ENCODE measurements at regions of chr3 and their contacts with region 1.

Region 1: GRCh38 chr3:112676659-112677234 is 35.8 kb upstream of the CCDC80 start:
- DNase-seq: peak; percentile 87
- H3K4me3 Mint-ChIP-seq: peak overlapping the region; percentile 66
- H3K27ac Mint-ChIP-seq: peak overlapping the region; percentile 82
- H3K4me1 Mint-ChIP-seq: peaks cover 66% of the 10 kb centered on the region
- H3K27me3 Mint-ChIP-seq: peaks cover 9% of the 10 kb centered on the region

Region 2: GRCh38 chr3:110814170-110815007 is 1862.4 kb before region 1 on chr3:
- intact Hi-C with region 1: loop called (anchors 10 kb)
- DNase-seq: peak; percentile 35
- H3K4me3 Mint-ChIP-seq: peak overlapping the region; percentile 43
- H3K27ac Mint-ChIP-seq: peak overlapping the region; percentile 91
- H3K4me1 Mint-ChIP-seq: peaks cover 29% of the 10 kb centered on the region
- H3K27me3 Mint-ChIP-seq: peaks cover 26% of the 10 kb centered on the region

Region 3: DNA sequence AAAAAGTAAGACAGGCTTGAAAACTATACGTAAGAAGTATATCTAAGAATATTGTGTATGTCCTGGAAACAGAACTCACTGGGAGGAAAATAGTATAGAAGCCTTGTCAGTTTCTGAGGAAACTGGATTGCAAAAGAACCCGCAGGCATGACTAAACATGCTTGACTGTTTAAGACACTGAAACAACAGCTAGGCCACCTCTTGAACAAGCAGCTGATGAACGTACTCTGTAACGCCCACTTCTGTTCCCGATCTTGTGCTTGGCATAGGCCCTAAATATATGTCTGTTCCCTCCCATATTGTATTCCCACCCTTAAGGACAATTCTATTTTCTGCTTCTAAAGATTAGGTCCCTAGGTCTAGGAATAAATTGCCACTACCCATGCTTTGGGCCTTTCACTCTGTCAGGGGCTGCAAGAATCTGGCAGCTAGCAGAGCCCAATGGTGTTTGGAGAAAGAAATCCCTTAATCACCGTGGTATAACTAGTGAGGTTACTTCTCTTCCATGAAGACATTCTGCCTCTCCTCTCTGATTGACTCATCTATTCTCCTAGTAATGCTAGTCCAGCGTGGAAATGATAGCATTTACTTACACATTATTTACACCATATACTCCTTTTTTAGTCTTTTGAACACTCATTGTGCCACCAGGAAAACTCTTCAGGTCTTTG is 297.6 kb before region 1 on chr3:
- intact Hi-C with region 1: loop called (anchors 10 kb)
- DNase-seq: no peak
- H3K4me3 Mint-ChIP-seq: no peak overlapping the region
- H3K27ac Mint-ChIP-seq: peak overlapping the region; percentile 83
- H3K4me1 Mint-ChIP-seq: peaks cover 77% of the 10 kb centered on the region
- H3K27me3 Mint-ChIP-seq: no peaks in the 10 kb centered on the region

Region 4: GRCh38 chr3:112473212-112473640 is 203.5 kb before region 1 on chr3:
- intact Hi-C with region 1: no loop called
- DNase-seq: no peak
- H3K4me3 Mint-ChIP-seq: peak overlapping the region; percentile 51
- H3K27ac Mint-ChIP-seq: no peak overlapping the region
- H3K4me1 Mint-ChIP-seq: peaks cover 53% of the 10 kb centered on the region
- H3K27me3 Mint-ChIP-seq: no peaks in the 10 kb centered on the region

Region 5: DNA sequence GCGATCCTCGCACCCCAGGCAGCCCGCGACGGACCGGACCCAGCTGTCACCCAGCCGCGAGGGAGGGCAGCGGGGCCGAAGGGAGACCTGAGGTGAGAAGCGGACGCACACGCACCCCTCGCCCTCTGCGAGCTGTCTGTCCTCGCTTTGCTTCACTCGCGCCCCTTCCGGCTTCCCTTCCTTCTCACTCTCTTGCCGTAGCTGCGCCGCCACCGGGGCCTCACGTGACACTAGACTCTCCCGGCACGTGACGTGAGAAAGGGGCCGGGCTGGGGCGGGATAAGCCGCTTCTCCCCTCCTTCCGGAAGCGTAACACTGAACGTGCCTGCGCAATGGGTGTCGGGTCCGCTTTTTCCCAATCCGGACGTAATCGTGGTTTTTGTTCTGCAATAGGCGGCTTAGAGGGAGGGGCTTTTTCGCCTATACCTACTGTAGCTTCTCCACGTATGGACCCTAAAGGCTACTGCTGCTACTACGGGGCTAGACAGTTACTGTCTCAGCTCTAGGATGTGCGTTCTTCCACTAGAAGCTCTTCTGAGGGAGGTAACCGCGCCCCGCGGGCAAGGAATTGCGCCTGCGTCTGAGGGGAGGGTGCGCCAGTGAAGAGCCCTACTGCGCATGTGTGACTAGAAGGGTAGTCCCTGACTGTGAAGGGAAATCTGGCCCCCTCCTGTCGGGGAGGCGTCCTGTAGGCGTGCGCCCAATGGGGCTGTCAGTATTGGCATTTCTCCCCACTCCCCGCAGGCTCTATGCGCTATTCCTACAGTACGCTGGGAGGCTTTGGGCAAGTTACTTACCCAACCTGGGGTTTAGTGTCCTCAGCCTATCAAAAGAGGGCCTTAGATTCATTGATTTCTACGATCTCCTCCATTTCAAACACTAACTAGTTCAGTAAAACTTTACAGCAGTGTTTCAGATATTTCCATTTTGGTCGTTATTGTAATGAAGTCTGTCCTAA is 114.7 kb before region 1 on chr3 and contains the starts of genes ATG3 and SLC35A5:
- intact Hi-C with region 1: loop called (anchors 2 kb)
- DNase-seq: peak; percentile 98
- H3K4me3 Mint-ChIP-seq: peak within 1 kb of the TSS; percentile 92
- H3K27ac Mint-ChIP-seq: peak within 1 kb of the TSS; percentile 99
- H3K4me1 Mint-ChIP-seq: peaks cover 49% of the 10 kb centered on the region
- H3K27me3 Mint-ChIP-seq: no peaks in the 10 kb centered on the region
- total RNA-seq, gene ATG3: 61.1 and 61.6 TPM in 2 replicates
- total RNA-seq, gene SLC35A5: 12.6 and 17.8 TPM in 2 replicates

Region 6: GRCh38 chr3:112734718-112735350 is 58.1 kb after region 1 on chr3:
- intact Hi-C with region 1: loop called (anchors 1 kb)
- DNase-seq: peak; percentile 51
- H3K4me3 Mint-ChIP-seq: no peak overlapping the region
- H3K27ac Mint-ChIP-seq: no peak overlapping the region
- H3K4me1 Mint-ChIP-seq: peaks cover 47% of the 10 kb centered on the region
- H3K27me3 Mint-ChIP-seq: no peaks in the 10 kb centered on the region

Region 7: DNA sequence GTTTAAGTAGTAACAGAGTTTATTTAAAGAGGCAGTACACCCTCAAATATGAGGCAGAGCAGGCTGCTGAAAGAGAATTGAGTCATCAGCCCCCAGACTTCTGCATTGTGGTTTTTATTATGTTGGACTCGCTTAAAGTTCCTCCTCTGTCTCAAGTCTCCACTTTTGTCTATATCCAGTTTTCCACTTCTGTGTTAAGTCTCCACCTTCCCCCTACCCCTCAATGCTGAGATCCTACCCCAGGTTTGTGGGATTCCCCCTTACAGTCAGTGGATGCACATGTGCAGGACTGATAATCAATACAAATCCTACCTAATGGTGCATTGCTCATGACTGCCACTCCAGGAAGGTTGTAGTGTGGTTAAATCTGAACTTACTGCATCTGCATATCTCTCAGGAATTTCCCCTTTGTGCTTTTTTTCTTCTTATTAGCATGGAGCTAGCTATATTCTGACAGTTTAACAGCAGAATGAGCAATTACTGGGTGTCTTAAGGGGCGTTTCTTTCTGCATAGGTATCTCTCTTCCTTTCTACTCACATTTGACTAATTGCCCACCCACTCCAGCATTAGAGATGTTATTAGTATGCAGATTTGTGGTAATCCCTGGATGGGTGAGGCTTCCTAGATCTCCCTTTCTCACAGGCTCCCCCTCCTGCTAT is 181.8 kb after region 1 on chr3:
- intact Hi-C with region 1: loop called (anchors 5 kb)
- DNase-seq: no peak
- H3K4me3 Mint-ChIP-seq: peak overlapping the region; percentile 0
- H3K27ac Mint-ChIP-seq: peak overlapping the region; percentile 34
- H3K4me1 Mint-ChIP-seq: peaks cover 30% of the 10 kb centered on the region
- H3K27me3 Mint-ChIP-seq: no peaks in the 10 kb centered on the region

Region 8: DNA sequence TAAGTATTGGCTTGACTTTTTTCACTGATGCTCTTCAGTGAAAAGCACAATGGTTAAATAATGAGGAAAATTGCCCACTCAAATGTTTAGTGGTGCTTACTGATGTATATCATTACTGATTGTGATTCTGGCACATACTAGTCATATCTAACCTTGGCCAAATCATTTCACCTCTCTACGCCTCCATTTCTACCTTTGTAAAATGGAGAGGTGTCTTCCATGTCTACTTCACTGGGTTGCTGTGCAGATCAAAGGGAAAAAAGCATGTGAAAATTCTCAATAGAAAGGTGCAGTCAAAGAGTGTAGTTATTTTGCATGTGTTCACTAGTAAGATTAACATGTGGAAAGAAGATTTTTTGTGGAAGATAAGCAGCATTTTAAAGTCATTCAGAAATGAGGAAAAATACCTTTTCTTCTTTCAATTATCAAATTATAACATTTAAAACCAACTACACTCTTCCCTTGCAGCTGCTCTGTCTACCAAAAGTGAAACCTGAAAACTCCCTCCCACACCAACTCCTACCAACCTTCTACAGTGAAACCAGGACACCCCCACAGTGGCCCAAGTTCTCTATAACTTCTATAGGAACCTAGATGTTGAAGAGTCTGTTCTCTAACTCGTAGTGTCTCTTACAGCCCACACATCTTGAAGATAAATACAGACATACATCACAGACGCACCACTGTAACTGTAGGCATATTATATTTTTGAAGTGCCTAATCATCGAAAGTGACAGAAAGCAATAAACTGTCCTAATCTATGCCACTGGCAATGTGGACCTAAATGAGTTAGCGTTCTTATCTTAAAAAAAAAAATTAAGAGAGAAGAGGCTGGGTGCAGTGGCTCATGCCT is 296.8 kb after region 1 on chr3:
- intact Hi-C with region 1: loop called (anchors 1 kb)
- DNase-seq: peak; percentile 34
- H3K4me3 Mint-ChIP-seq: peak overlapping the region; percentile 84
- H3K27ac Mint-ChIP-seq: peak overlapping the region; percentile 94
- H3K4me1 Mint-ChIP-seq: peaks cover 73% of the 10 kb centered on the region
- H3K27me3 Mint-ChIP-seq: no peaks in the 10 kb centered on the region

Measured in activated T-helper 2 cell treated with anti-CD3 and anti-CD28 coated beads, Interferon-gamma antibody, Interleukin-2, Interleukin-4, amounts not matched to agents 10 μg/mL and 5 μg/mL and 100 μg/mL, durations not matched to agents 14 hours and 24 hours and 36 hours (primary cell).